ENCODE measurements at regions of chr10 and their contacts with region 1.

Region 1: GRCh38 chr10:48981310-48981907 is 41.8 kb upstream of the LRRC18 start:
- DNase-seq: peak; percentile 7
- H3K4me3 ChIP-seq: no peak overlapping the region
- H3K27ac ChIP-seq: no peak overlapping the region
- H3K4me1 ChIP-seq: no peaks in the 10 kb centered on the region
- H3K27me3 ChIP-seq: no peaks in the 10 kb centered on the region
- CTCF ChIP-seq: peak; percentile 63 to 89

Region 2: GRCh38 chr10:48934672-48935501 is 46.5 kb before region 1 on chr10:
- CTCF ChIA-PET with region 1: no interaction called
- dilution Hi-C with region 1: no loop called
- in situ Hi-C with region 1: no loop called
- intact Hi-C with region 1: no loop called
- DNase-seq: no peak
- H3K4me3 ChIP-seq: no peak overlapping the region
- H3K27ac ChIP-seq: no peak overlapping the region
- H3K4me1 ChIP-seq: no peaks in the 10 kb centered on the region
- H3K27me3 ChIP-seq: peaks cover 6% of the 10 kb centered on the region
- CTCF ChIP-seq: no peak

Region 3: DNA sequence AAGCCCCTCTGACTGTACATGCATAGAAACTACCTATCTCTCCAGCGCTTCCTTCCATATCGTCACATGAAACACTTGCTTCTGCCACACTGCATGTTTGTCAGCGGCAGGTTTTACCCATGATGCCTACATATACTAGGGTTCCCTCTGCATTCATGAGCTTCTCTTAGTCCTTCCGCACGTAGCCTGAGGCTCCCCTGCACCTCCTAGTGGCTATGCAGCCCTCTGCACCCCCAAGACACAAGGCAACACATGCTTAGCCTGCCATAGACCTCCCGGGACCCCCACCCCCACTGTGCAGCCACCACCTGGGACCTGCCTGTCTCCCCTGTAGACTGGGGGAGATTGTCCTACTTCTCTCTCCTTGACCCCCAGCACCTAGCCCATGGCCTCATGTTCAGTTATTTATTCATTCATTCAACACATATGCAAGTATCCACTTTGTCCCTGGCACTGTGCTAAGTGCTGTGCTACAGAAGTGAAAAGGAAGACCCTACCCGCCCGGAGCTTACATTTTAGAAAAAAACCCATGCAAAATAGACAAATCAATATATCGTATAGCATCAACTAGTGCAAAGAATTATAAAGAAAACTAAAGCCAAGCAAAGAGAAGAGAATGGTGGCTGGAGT is 183.3 kb after region 1 on chr10:
- CTCF ChIA-PET with region 1: no interaction called
- dilution Hi-C with region 1: no loop called
- in situ Hi-C with region 1: no loop called
- intact Hi-C with region 1: loop called (anchors 1 kb)
- DNase-seq: peak; percentile 3
- H3K4me3 ChIP-seq: no peak overlapping the region
- H3K27ac ChIP-seq: no peak overlapping the region
- H3K4me1 ChIP-seq: no peaks in the 10 kb centered on the region
- H3K27me3 ChIP-seq: no peaks in the 10 kb centered on the region
- CTCF ChIP-seq: peak; percentile 37 to 63

Region 4: DNA sequence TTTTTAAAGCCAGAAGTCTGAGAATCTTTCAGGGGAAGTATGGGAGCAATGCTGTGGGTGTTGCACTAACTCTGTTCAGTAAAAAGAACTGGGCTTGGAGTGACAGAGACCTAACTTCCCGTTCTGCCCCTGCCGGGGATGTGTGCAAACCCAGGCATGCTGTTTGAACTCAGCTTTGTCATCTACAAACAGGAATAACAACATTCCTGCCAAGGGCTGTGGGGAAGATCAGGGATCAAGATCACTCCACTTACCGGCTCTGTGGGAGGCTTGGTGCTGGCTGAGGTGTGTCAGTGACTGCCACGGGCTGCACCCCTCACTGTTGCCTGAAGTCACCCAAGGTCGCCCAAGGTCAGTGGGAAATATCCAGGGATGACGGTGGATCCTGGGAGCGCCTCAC is 437.6 kb after region 1 on chr10:
- CTCF ChIA-PET with region 1: no interaction called
- dilution Hi-C with region 1: no loop called
- in situ Hi-C with region 1: no loop called
- intact Hi-C with region 1: loop called (anchors 5 kb)
- DNase-seq: peak; percentile 86
- H3K4me3 ChIP-seq: no peak overlapping the region
- H3K27ac ChIP-seq: peak overlapping the region; percentile 39
- H3K4me1 ChIP-seq: peaks cover 16% of the 10 kb centered on the region
- H3K27me3 ChIP-seq: no peaks in the 10 kb centered on the region
- CTCF ChIP-seq: peak in 1 of 2 donors; percentile 32

Region 5: GRCh38 chr10:49512121-49512809 is 530.9 kb after region 1 on chr10:
- CTCF ChIA-PET with region 1: no interaction called
- dilution Hi-C with region 1: no loop called
- in situ Hi-C with region 1: no loop called
- intact Hi-C with region 1: loop called (anchors 2 kb)
- DNase-seq: peak; percentile 7
- H3K4me3 ChIP-seq: no peak overlapping the region
- H3K27ac ChIP-seq: no peak overlapping the region
- H3K4me1 ChIP-seq: no peaks in the 10 kb centered on the region
- H3K27me3 ChIP-seq: no peaks in the 10 kb centered on the region
- CTCF ChIP-seq: peak; percentile 53 to 65

Measured in mammary epithelial cell (primary cell).